Activated CD8-positive, alpha-beta memory T cell treated with anti-CD3 and anti-CD28 coated beads, Interleukin-2, amount 10 ng/mL, durations not matched to agents 7 days and 5 days (primary cell): ENCODE measurements at regions of chr6 and their contacts with region 1.

Region 1: GRCh38 chr6:44257025-44257752 is at the start of gene SLC35B2:
- DNase-seq: peak; percentile 77
- ATAC-seq: peak; percentile 71
- H3K4me3 Mint-ChIP-seq: peak within 1 kb of the TSS; percentile 90
- H3K27ac Mint-ChIP-seq: peak within 1 kb of the TSS; percentile 88
- H3K4me1 Mint-ChIP-seq: peaks cover 68% of the 10 kb centered on the region
- H3K27me3 Mint-ChIP-seq: no peaks in the 10 kb centered on the region
- total RNA-seq, gene SLC35B2: 28.0 to 39.6 TPM

Region 2: DNA sequence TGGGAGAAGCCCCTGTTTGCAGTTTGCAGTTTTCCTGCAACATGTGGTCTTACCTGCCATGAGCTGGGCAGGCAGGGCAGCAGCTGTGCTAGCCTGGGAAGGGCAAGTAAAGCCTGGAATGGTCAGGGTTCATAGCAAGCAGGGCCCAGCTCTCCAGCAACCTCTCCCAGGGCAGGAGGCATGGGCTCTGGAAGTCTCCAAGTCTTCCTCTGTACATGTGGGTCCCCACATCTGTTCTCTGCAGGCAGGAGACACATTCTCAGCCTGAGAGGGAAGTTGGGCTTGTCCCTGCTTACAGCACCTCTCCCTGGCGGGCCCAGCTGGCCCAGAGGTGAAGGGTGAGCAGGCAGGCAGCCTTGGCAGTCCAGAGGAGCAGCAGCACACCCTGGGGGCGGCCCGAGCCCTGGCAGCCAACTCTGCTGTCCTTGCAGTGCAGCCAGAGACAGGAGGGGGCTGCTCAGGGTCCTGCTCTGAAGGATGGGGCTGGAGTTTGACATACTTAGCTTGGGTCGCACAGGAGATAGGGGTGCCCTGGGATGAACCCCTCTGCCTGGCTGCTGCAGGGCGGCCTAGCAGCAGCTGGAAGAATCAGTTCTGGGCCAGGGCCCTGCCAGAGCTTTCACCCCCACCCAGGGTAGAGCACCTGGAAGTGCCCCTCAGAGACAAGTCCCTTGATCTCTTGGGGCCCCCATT is 306.0 kb before region 1 on chr6:
- CTCF ChIA-PET with region 1: no interaction called
- DNase-seq: no peak
- ATAC-seq: no peak
- H3K4me3 Mint-ChIP-seq: no peak overlapping the region
- H3K27ac Mint-ChIP-seq: no peak overlapping the region
- H3K4me1 Mint-ChIP-seq: no peaks in the 10 kb centered on the region
- H3K27me3 Mint-ChIP-seq: peaks cover 20% of the 10 kb centered on the region

Region 3: DNA sequence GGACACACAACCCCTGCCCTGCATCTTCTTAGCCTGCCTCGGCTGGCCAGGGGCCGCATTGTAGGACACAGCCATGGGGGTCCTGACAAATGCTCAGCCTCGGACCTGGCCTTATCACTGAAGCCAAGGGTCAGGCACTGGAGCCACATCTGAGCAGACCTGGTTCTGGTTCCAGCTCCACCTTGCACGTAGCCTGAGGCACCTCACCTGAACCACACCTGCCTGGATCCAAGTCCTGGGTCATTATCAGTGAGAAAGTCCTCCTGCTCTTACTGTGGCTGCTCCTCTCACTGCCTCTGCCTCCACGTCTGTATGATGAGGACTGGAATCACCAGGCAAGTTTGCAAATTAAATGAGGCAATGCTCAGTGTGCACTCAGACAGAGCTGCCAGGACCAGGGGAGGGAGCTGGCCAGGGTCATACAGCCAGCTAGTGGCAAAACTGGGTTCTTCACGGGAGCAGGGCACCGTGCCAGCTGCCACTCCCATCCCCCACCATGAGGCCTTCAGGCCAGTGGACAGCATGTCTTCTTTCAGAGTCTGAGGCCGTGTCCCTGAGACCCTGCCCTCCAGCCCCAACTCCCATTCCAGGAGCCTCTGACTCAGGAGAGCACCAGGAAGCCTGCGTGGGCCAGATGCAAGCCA is 170.1 kb before region 1 on chr6:
- CTCF ChIA-PET with region 1: no interaction called
- DNase-seq: no peak
- ATAC-seq: no peak
- H3K4me3 Mint-ChIP-seq: no peak overlapping the region
- H3K27ac Mint-ChIP-seq: no peak overlapping the region
- H3K4me1 Mint-ChIP-seq: no peaks in the 10 kb centered on the region
- H3K27me3 Mint-ChIP-seq: no peaks in the 10 kb centered on the region

Region 4: GRCh38 chr6:44172731-44173500 is 84.3 kb before region 1 on chr6:
- CTCF ChIA-PET with region 1: interaction called, 12 read pairs
- DNase-seq: peak; percentile 87
- ATAC-seq: peak; percentile 90
- H3K4me3 Mint-ChIP-seq: no peak overlapping the region
- H3K27ac Mint-ChIP-seq: no peak overlapping the region
- H3K4me1 Mint-ChIP-seq: peaks cover 24% of the 10 kb centered on the region
- H3K27me3 Mint-ChIP-seq: peaks cover 24% of the 10 kb centered on the region

Region 5: DNA sequence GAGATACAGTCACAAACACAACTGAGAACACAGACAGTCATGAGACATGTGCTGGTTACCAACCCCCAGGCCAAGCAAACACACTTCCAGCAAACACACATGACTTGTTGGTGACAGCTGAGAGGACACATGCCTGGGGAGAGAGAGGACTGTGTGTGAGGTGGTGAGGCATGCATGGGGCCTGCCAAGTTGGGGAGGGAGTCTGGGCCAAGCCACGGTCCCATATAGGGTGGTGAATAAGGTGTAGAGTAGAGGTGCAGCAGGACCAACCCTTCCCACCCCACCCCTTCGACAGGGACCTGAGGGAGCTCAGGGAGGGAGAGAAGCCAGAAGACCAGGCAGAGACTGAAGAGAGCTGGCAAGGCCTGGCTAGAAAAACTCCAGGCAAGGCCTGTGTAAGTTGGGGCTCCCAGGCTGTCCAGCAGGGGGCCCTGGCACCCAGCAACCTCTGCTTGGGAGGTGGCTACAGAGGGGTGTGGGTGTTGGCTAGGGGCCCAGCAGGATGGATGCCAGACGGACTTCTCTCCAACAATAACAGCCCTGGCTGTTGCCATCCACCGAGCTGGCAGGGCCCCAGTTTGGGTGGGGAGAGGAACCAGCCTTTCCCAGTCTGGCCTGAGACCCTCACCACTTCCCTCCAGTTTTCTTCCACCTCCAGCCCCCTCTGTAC is 35.8 kb before region 1 on chr6:
- CTCF ChIA-PET with region 1: interaction called, 17 read pairs
- DNase-seq: peak; percentile 85
- ATAC-seq: peak; percentile 64
- H3K4me3 Mint-ChIP-seq: no peak overlapping the region
- H3K27ac Mint-ChIP-seq: peak overlapping the region; percentile 3
- H3K4me1 Mint-ChIP-seq: peaks cover 37% of the 10 kb centered on the region
- H3K27me3 Mint-ChIP-seq: peaks cover 11% of the 10 kb centered on the region

Region 6: GRCh38 chr6:44237813-44238433 is 19.3 kb before region 1 on chr6:
- CTCF ChIA-PET with region 1: interaction called, 20 read pairs
- DNase-seq: peak; percentile 85
- ATAC-seq: peak; percentile 94
- H3K4me3 Mint-ChIP-seq: peak overlapping the region; percentile 84
- H3K27ac Mint-ChIP-seq: peak overlapping the region; percentile 96
- H3K4me1 Mint-ChIP-seq: peaks cover 26% of the 10 kb centered on the region
- H3K27me3 Mint-ChIP-seq: no peaks in the 10 kb centered on the region

Region 7: GRCh38 chr6:44246663-44247337 is 10.4 kb before region 1 on chr6 and contains the start of gene HSP90AB1:
- CTCF ChIA-PET with region 1: interaction called, 55 read pairs
- DNase-seq: peak; percentile 98
- ATAC-seq: peak; percentile 82
- H3K4me3 Mint-ChIP-seq: peak within 1 kb of the TSS; percentile 99
- H3K27ac Mint-ChIP-seq: peak within 1 kb of the TSS; percentile 99
- H3K4me1 Mint-ChIP-seq: peaks cover 52% of the 10 kb centered on the region
- H3K27me3 Mint-ChIP-seq: no peaks in the 10 kb centered on the region
- total RNA-seq, gene HSP90AB1: 734 to 1,112 TPM

Region 8: DNA sequence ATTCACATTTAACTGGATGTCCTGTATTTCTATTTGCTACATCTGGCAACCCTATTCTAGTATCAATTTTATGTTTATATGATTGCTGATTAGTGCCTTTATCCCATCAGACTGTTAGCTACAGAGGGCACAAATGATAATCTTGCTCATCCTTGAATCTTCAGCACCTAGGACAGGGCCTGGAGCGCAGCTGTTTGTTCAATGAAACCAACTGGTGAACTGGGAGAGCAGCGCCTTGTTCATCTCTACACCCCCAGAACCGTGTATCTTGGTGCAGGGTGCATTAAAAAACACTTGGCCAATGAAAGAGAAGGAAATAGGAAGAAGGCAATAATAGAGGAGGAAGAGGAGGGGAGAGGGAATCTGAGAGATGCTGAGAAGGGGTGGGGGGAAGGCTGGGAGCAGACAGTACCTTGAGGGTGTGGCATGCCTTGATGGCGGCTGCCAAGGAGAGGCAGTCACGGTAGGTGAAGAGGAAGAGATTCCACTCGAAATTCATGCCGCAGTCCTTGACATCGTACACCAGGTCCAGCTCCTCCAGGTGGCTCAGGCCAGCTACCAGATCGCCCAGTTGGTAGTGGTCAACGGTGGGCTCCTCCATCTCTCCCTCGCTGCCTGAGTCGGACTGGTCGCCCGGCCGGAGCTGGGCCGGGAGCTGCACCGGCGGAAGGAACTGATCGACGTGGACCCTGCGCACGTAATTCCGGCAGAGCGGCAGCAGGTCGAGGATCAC is 28.5 kb after region 1 on chr6:
- CTCF ChIA-PET with region 1: no interaction called
- DNase-seq: no peak
- ATAC-seq: no peak
- H3K4me3 Mint-ChIP-seq: no peak overlapping the region
- H3K27ac Mint-ChIP-seq: no peak overlapping the region
- H3K4me1 Mint-ChIP-seq: no peaks in the 10 kb centered on the region
- H3K27me3 Mint-ChIP-seq: peaks cover 56% of the 10 kb centered on the region

Region 9: DNA sequence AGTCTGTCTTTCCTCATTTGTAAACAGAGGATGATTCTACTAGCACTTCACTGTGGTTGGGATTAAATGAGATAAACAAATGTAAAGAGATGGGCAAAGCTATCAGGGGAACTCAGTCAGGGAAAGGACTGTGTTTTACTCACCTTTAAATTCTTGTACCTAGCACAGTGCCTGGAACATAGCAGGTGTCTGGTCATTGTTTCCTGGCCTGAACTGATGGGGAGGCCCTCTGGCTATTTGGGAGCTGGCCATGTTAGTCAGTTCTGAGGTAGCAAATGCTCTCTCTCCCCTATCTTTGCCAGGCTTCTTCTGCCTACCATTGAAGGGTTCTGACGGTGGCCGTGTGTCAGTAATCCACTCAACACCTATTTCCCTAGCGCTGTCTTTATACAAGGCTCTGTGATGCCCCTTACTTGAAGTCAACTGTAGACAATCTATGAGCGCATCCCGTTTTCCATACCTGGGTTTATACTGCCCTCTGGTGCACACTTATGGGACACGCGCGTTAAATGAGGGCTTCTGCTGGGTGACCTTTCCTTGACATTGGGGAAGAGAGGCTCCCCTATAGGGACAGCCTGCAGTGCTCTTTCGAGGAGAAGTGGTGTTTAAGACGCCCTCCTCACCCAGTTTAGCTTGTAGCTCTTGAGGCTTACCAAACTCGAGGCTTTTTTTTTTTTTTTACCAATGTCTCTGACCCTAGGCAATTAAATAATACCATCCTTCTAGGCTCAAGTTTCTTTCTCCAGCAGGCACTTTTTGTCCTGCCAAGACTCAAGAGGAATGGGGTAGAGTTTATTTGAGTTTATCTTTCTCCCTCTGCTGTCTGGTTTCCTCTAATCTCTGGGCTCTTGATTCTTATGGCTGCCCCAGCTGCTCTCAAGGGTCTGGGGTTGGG is 81.3 kb after region 1 on chr6:
- CTCF ChIA-PET with region 1: interaction called, 10 read pairs
- DNase-seq: peak; percentile 79
- ATAC-seq: peak; percentile 88
- H3K4me3 Mint-ChIP-seq: no peak overlapping the region
- H3K27ac Mint-ChIP-seq: no peak overlapping the region
- H3K4me1 Mint-ChIP-seq: peaks cover 4% of the 10 kb centered on the region
- H3K27me3 Mint-ChIP-seq: peaks cover 38% of the 10 kb centered on the region

Region 10: GRCh38 chr6:44538807-44539201 is 281.6 kb after region 1 on chr6:
- CTCF ChIA-PET with region 1: no interaction called
- DNase-seq: no peak
- ATAC-seq: no peak
- H3K4me3 Mint-ChIP-seq: no peak overlapping the region
- H3K27ac Mint-ChIP-seq: no peak overlapping the region
- H3K4me1 Mint-ChIP-seq: no peaks in the 10 kb centered on the region
- H3K27me3 Mint-ChIP-seq: peaks cover 9% of the 10 kb centered on the region